Gastrocnemius medialis (tissue), 4 donors: ENCODE measurements at regions of chr11 and their contacts with region 1.

Region 1: GRCh38 chr11:9363954-9364912 is 20.2 kb upstream of the IPO7 start:
- DNase-seq: peak; percentile 93 to 96
- ATAC-seq: peak; percentile 98
- H3K4me3 ChIP-seq: peak overlapping the region; percentile 46 to 69 (median 56)
- H3K27ac ChIP-seq: peak overlapping the region; percentile 98 to 100 (median 99)
- H3K4me1 ChIP-seq: peaks cover 3 to 8% of the 10 kb centered on the region in 2 donors
- H3K27me3 ChIP-seq: no peaks in the 10 kb centered on the region
- CTCF ChIP-seq: no peak
- POLR2A ChIP-seq: peak; percentile 68 to 82

Region 2: GRCh38 chr11:8989453-8989852 is 374.8 kb before region 1 on chr11:
- in situ Hi-C with region 1: no loop called
- intact Hi-C with region 1: no loop called
- DNase-seq: no peak
- ATAC-seq: no peak
- H3K4me3 ChIP-seq: no peak overlapping the region
- H3K27ac ChIP-seq: no peak overlapping the region
- H3K4me1 ChIP-seq: no peaks in the 10 kb centered on the region
- H3K27me3 ChIP-seq: peaks cover 0 to 2% (median 0%) of the 10 kb centered on the region in 3 donors
- CTCF ChIP-seq: no peak
- POLR2A ChIP-seq: no peak

Region 3: GRCh38 chr11:9460322-9461067 is 96.3 kb after region 1 on chr11 and contains the start of gene ZNF143:
- in situ Hi-C with region 1: no loop called
- intact Hi-C with region 1: loop called (anchors 1 kb)
- DNase-seq: peak; percentile 100
- ATAC-seq: peak; percentile 92 to 95
- H3K4me3 ChIP-seq: peak within 1 kb of the TSS; percentile 87 to 100 (median 96)
- H3K27ac ChIP-seq: peak within 1 kb of the TSS; percentile 98 to 100 (median 100)
- H3K4me1 ChIP-seq: peaks cover 20 to 27% of the 10 kb centered on the region in 2 donors
- H3K27me3 ChIP-seq: no peaks in the 10 kb centered on the region
- CTCF ChIP-seq: peak in 3 of 5 experiments; percentile 19 to 69 (median 42)
- POLR2A ChIP-seq: peak; percentile 88 to 94
- total RNA-seq, gene ZNF143: 33.3 to 42.6 (median 36.9) TPM